B cell (primary cell): ENCODE measurements at regions of chr6 and their contacts with region 1.

Region 1: GRCh38 chr6:32868257-32868788 is 14.3 kb downstream of the PSMB9 start:
- DNase-seq: peak; percentile 91
- ATAC-seq: peak; percentile 64
- H3K4me3 ChIP-seq: no peak overlapping the region
- H3K4me3 Mint-ChIP-seq: no peak overlapping the region
- H3K27ac ChIP-seq: no peak overlapping the region
- H3K27ac Mint-ChIP-seq: no peak overlapping the region
- H3K4me1 ChIP-seq: peaks cover 27 to 28% of the 10 kb centered on the region in 2 donors
- H3K4me1 Mint-ChIP-seq: peaks cover 30% of the 10 kb centered on the region
- H3K27me3 ChIP-seq: no peaks in the 10 kb centered on the region
- H3K27me3 Mint-ChIP-seq: no peaks in the 10 kb centered on the region
- CTCF ChIP-seq: peak; percentile 94

Region 2: GRCh38 chr6:32413427-32414047 is 454.8 kb before region 1 on chr6:
- CTCF ChIA-PET with region 1: interaction called, 24 read pairs
- POLR2A ChIA-PET with region 1: no interaction called
- intact Hi-C with region 1: loop called (anchors 1 kb)
- DNase-seq: peak; percentile 91
- ATAC-seq: peak; percentile 86
- H3K4me3 ChIP-seq: no peak overlapping the region
- H3K4me3 Mint-ChIP-seq: peak overlapping the region; percentile 27
- H3K27ac ChIP-seq: no peak overlapping the region
- H3K27ac Mint-ChIP-seq: peak overlapping the region; percentile 8
- H3K4me1 ChIP-seq: peaks cover 7 to 11% of the 10 kb centered on the region in 2 donors
- H3K4me1 Mint-ChIP-seq: peaks cover 13% of the 10 kb centered on the region
- H3K27me3 ChIP-seq: peaks cover 0 to 19% (median 10%) of the 10 kb centered on the region in 4 experiments
- H3K27me3 Mint-ChIP-seq: peaks cover 20% of the 10 kb centered on the region
- CTCF ChIP-seq: peak; percentile 94

Region 3: GRCh38 chr6:32763427-32763826 is 104.9 kb before region 1 on chr6 and contains the start of gene HLA-DQB2:
- CTCF ChIA-PET with region 1: no interaction called
- POLR2A ChIA-PET with region 1: no interaction called
- intact Hi-C with region 1: no loop called
- DNase-seq: peak; percentile 56
- ATAC-seq: no peak
- H3K4me3 ChIP-seq: peak within 1 kb of the TSS in 2 of 5 experiments; percentile 18 to 30
- H3K4me3 Mint-ChIP-seq: peak within 1 kb of the TSS; percentile 63
- H3K27ac ChIP-seq: no peak within 1 kb of the TSS
- H3K27ac Mint-ChIP-seq: peak within 1 kb of the TSS; percentile 69
- H3K4me1 ChIP-seq: peaks cover 0 to 4% of the 10 kb centered on the region in 2 donors
- H3K4me1 Mint-ChIP-seq: peaks cover 4% of the 10 kb centered on the region
- H3K27me3 ChIP-seq: peaks cover 0 to 14% (median 5%) of the 10 kb centered on the region in 4 experiments
- H3K27me3 Mint-ChIP-seq: peaks cover 47% of the 10 kb centered on the region
- CTCF ChIP-seq: no peak
- total RNA-seq, gene HLA-DQB2: 109 and 112 TPM in 2 replicates

Region 4: GRCh38 chr6:32785781-32786533 is 82.4 kb before region 1 on chr6:
- CTCF ChIA-PET with region 1: interaction called, 58 read pairs
- POLR2A ChIA-PET with region 1: no interaction called
- intact Hi-C with region 1: no loop called
- DNase-seq: peak; percentile 77
- ATAC-seq: no peak
- H3K4me3 ChIP-seq: no peak overlapping the region
- H3K4me3 Mint-ChIP-seq: no peak overlapping the region
- H3K27ac ChIP-seq: no peak overlapping the region
- H3K27ac Mint-ChIP-seq: no peak overlapping the region
- H3K4me1 ChIP-seq: no peaks in the 10 kb centered on the region
- H3K4me1 Mint-ChIP-seq: peaks cover 2% of the 10 kb centered on the region
- H3K27me3 ChIP-seq: no peaks in the 10 kb centered on the region
- H3K27me3 Mint-ChIP-seq: no peaks in the 10 kb centered on the region
- CTCF ChIP-seq: peak; percentile 82

Region 5: GRCh38 chr6:32825966-32826365 is 42.4 kb before region 1 on chr6:
- CTCF ChIA-PET with region 1: interaction called, 27 read pairs
- POLR2A ChIA-PET with region 1: interaction called, 5 read pairs
- intact Hi-C with region 1: no loop called
- DNase-seq: no peak
- ATAC-seq: no peak
- H3K4me3 ChIP-seq: no peak overlapping the region
- H3K4me3 Mint-ChIP-seq: no peak overlapping the region
- H3K27ac ChIP-seq: no peak overlapping the region
- H3K27ac Mint-ChIP-seq: no peak overlapping the region
- H3K4me1 ChIP-seq: peaks cover 11% of the 10 kb centered on the region in 2 donors
- H3K4me1 Mint-ChIP-seq: peaks cover 15% of the 10 kb centered on the region
- H3K27me3 ChIP-seq: no peaks in the 10 kb centered on the region
- H3K27me3 Mint-ChIP-seq: no peaks in the 10 kb centered on the region
- CTCF ChIP-seq: no peak

Region 6: GRCh38 chr6:32853541-32854375 is 14.6 kb before region 1 on chr6 and contains the starts of genes PSMB9 and TAP1:
- CTCF ChIA-PET with region 1: interaction called, 44 read pairs
- POLR2A ChIA-PET with region 1: interaction called, 26 read pairs
- intact Hi-C with region 1: loop called (anchors 1 kb)
- DNase-seq: peak; percentile 98
- ATAC-seq: peak; percentile 82
- H3K4me3 ChIP-seq: peak within 1 kb of the TSS; percentile 91 to 98 (median 94)
- H3K4me3 Mint-ChIP-seq: peak within 1 kb of the TSS; percentile 99
- H3K27ac ChIP-seq: peak within 1 kb of the TSS; percentile 98 to 99
- H3K27ac Mint-ChIP-seq: peak within 1 kb of the TSS; percentile 100
- H3K4me1 ChIP-seq: peaks cover 60 to 63% of the 10 kb centered on the region in 2 donors
- H3K4me1 Mint-ChIP-seq: peaks cover 75% of the 10 kb centered on the region
- H3K27me3 ChIP-seq: no peaks in the 10 kb centered on the region
- H3K27me3 Mint-ChIP-seq: no peaks in the 10 kb centered on the region
- CTCF ChIP-seq: peak; percentile 81
- total RNA-seq, gene PSMB9: 174 and 181 TPM in 2 replicates
- total RNA-seq, gene TAP1: 126 and 131 TPM in 2 replicates

Region 7: GRCh38 chr6:32947552-32948465 is 79.5 kb after region 1 on chr6:
- CTCF ChIA-PET with region 1: interaction called, 71 read pairs
- POLR2A ChIA-PET with region 1: no interaction called
- intact Hi-C with region 1: no loop called
- DNase-seq: peak; percentile 76
- ATAC-seq: no peak
- H3K4me3 ChIP-seq: peak overlapping the region in 3 of 5 experiments; percentile 2 to 35 (median 6)
- H3K4me3 Mint-ChIP-seq: peak overlapping the region; percentile 84
- H3K27ac ChIP-seq: peak overlapping the region; percentile 97 to 98
- H3K27ac Mint-ChIP-seq: peak overlapping the region; percentile 92
- H3K4me1 ChIP-seq: peaks cover 80 to 94% of the 10 kb centered on the region in 2 donors
- H3K4me1 Mint-ChIP-seq: peaks cover 86% of the 10 kb centered on the region
- H3K27me3 ChIP-seq: no peaks in the 10 kb centered on the region
- H3K27me3 Mint-ChIP-seq: no peaks in the 10 kb centered on the region
- CTCF ChIP-seq: peak; percentile 70

Region 8: DNA sequence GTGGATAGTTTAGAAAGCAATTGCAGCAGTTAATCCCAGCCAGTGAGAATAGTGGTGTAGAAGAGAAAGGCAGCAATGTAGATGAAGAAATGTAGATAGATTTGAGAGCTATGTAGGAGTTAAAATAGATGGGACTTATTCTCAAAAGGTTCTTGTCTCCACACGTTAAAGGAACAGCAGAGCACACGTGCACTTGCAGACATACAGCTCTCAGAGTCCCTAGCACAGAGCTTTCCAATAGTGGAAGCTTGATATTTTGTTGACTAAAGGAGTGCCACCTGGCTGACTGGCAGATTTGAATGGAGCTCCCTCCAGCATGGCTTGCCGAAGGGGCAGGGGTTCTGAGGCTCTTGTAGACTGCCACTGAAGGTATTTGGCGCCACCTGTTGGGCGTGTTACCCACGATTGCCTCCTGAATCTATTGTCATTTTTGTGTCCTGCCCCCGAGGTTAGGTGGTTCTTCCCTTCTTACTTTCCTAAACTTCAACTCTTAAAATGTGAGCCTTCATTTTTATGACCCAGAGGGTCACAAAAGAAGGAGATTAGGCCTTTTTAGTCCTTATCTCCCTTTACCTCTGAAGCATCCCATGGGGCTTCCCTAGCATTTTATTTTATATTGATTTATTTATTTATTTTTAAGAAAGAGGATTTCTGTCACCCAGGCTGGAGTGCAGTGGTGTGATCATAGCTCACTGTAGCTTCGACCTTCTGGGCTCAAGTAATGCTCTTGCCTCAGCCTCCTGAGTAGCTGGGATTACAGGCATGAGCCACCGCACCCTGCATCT is 116.5 kb after region 1 on chr6:
- CTCF ChIA-PET with region 1: interaction called, 103 read pairs
- POLR2A ChIA-PET with region 1: interaction called, 7 read pairs
- intact Hi-C with region 1: no loop called
- DNase-seq: peak; percentile 92
- ATAC-seq: peak; percentile 95
- H3K4me3 ChIP-seq: no peak overlapping the region
- H3K4me3 Mint-ChIP-seq: no peak overlapping the region
- H3K27ac ChIP-seq: peak overlapping the region; percentile 13 to 60
- H3K27ac Mint-ChIP-seq: peak overlapping the region; percentile 28
- H3K4me1 ChIP-seq: peaks cover 17 to 19% of the 10 kb centered on the region in 2 donors
- H3K4me1 Mint-ChIP-seq: peaks cover 33% of the 10 kb centered on the region
- H3K27me3 ChIP-seq: no peaks in the 10 kb centered on the region
- H3K27me3 Mint-ChIP-seq: no peaks in the 10 kb centered on the region
- CTCF ChIP-seq: peak; percentile 91